K562 (cell line): ENCODE measurements at regions of chr3 and their contacts with region 1.

Region 1: DNA sequence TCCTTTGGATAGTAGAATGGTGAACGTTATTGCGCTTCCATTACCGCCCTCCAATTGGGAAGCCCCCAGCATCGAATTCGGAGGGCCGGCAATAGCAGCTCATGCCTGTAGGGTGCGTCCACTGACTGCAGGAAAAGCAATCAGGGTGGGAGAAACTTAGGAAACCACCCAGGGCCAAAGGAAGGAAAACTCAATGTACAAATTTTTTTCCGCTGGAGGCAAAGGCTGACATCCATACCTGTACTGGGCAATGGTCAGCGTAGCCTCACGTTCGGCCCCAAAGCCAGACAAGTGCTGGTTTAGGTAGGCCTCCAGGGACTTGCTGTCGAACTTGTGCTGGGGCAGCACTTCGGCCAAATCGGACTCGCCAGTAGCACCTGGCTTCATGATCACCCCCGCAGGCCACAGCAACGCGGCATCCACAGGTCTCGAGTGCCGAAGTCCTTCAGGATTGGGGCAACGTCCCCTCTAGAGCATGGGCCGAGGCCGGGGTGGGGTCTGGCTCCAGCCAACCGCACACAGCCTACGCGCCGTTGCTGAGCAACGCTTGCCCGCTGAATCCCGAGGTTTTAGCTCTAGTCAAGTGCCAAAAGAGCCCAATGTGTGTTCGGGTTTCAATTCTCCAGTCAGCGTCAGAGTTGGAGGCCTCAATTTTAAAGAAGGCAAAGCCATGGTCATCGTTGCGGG is at the start of gene ACAD11:
- DNase-seq: peak; percentile 38 to 63 (median 52)
- ATAC-seq: peak; percentile 81
- H3K4me3 ChIP-seq: peak within 1 kb of the TSS; percentile 91
- H3K27ac ChIP-seq: peak within 1 kb of the TSS; percentile 91
- H3K4me1 ChIP-seq: peaks cover 0 to 9% of the 10 kb centered on the region in 2 experiments; a peak in 4 of 5 replicates
- H3K27me3 ChIP-seq: no peaks in the 10 kb centered on the region
- CTCF ChIP-seq: peak; percentile 56 to 76 (median 60)
- EP300 ChIP-seq: no peak
- POLR2A ChIP-seq: no peak
- RAD21 ChIP-seq: peak in 1 of 2 experiments; percentile 39; a peak in 2 of 4 replicates
- polyA plus RNA-seq, gene ACAD11: 1.3 to 2.1 TPM

Region 2: GRCh38 chr3:132870446-132870995 is 211.0 kb after region 1 on chr3:
- CTCF ChIA-PET with region 1: no interaction called
- POLR2A ChIA-PET with region 1: no interaction called
- in situ Hi-C with region 1: no loop called
- intact Hi-C with region 1: no loop called
- DNase-seq: no peak
- ATAC-seq: no peak
- H3K4me3 ChIP-seq: no peak overlapping the region
- H3K27ac ChIP-seq: no peak overlapping the region
- H3K4me1 ChIP-seq: no peaks in the 10 kb centered on the region; a peak in 1 of 5 replicates
- H3K27me3 ChIP-seq: no peaks in the 10 kb centered on the region
- CTCF ChIP-seq: no peak
- EP300 ChIP-seq: no peak
- POLR2A ChIP-seq: no peak
- RAD21 ChIP-seq: no peak

Region 3: DNA sequence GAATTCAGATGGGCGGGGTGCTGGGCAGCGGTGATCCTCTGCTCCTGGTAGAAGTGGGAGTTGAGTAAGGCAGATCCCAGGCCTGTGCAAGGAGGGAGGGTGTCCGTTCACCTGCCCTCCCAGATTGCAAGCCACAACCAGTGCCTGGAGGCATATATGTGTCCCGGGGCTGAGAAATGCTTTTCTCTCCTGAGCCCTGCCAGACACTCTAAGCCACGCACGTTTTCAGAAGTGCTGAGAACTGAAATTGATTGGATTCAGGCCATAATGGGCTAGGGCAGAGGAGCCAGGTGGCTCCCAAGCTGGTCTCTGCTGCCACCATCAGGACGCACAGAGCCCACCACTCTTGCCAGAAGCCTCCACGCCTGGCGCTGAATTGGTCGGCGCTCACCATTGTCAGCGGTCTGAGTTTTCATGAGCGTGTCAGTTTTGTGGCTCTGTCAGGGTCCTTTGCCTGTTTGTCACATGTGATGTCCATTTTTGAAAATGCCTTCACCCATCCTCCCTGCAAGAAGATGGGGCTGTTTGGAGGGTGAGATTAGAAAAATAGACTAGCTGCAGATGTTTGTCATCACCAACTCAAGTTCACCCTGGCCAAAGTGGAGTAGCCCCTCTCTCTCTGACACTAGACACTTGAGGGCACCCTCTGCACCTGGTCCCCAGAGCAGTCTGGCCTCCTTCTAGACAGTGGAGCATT is 725.0 kb after region 1 on chr3:
- CTCF ChIA-PET with region 1: no interaction called
- POLR2A ChIA-PET with region 1: no interaction called
- in situ Hi-C with region 1: no loop called
- intact Hi-C with region 1: loop called (anchors 5 kb)
- DNase-seq: peak; percentile 29 to 41 (median 33)
- ATAC-seq: peak; percentile 93
- H3K4me3 ChIP-seq: no peak overlapping the region
- H3K27ac ChIP-seq: no peak overlapping the region
- H3K4me1 ChIP-seq: no peaks in the 10 kb centered on the region; a peak in 1 of 5 replicates
- H3K27me3 ChIP-seq: no peaks in the 10 kb centered on the region
- CTCF ChIP-seq: peak; percentile 58 to 68 (median 66)
- EP300 ChIP-seq: no peak
- POLR2A ChIP-seq: no peak
- RAD21 ChIP-seq: peak; percentile 63 to 75